ENCODE measurements at regions of chr2 and their contacts with region 1.

Region 1: DNA sequence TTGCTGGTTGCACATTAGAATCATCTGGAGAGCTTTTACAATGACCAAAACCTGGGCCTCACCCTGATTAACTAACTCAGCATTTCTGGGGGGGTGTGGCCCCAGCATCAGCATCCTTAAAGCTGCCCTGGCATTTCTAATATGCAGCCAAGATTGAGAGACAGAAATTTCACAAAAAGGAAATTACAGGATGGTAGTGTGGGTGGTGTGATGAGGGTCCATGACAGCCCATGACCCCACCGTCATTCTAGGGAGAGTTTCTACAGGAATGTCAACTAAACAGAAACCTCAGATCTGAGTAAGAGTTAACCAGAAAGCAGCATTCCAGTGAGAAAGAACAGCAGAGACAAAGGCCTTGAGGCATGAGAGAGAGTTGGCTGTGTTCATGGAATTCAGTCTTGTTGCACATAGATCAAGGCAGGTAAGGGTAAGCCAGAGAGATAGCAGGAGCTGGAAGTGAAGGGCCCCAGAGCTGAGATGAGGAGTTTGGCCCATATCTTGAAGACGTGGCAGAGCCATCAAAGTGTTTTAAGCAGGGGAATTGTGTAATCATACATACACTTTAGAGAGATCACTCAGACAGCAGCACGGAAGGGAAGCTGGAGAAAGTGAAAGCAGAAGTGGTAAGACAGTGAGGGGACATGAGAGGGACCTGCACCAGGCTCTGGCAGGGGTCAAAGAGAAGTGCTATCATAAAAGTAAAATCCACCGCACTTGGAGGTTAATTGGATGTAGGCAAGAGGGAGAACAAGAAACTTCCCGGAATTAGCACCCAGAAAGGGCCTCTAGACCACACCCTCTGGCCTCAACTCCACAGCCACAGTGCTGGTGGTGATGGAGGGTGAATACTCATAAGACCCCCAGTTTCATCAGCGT is 7.8 kb upstream of the TRABD2A start:
- DNase-seq: peak in 8 of 10 donors; percentile 40 to 84 (median 56)
- ATAC-seq: peak; percentile 96 to 98
- H3K4me3 Mint-ChIP-seq: peak overlapping the region; percentile 72 to 92 (median 86)
- H3K27ac Mint-ChIP-seq: peak overlapping the region; percentile 94 to 100 (median 98)
- H3K4me1 Mint-ChIP-seq: peaks cover 30 to 73% (median 49%) of the 10 kb centered on the region in 4 donors
- H3K27me3 Mint-ChIP-seq: no peaks in the 10 kb centered on the region

Region 2: DNA sequence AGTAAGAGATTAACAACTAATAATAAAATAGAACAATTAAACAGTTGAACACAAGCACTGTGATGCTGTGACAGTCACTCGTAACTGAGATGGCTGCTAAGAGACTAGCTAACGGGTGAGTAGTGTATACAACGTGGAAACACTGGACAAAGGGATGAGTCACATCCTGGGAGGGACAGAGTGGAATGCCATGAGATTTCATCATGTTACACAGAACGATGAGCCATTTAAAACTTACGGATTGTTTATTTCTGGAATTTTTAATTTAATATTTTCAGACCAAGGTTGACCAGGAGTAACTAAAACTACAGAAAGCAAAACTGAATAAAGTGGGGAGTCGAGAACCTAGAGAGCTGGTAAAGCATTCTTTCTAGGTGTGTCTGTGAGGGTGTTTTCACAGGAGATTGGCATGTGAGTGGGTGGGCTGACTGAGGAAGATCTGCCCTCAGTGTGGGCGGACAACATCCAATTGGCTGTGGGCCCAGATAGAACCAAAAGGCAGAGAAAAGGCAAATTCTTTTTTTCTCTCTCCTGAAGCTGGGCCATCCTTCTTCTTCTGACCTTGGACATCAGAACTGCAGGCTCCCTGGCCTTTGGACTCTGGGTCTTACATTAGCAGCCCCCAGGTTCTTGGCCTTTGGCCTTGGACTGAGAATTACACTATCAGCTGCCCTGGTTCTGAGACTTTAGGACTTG is 31.4 kb after region 1 on chr2:
- POLR2A ChIA-PET with region 1: interaction called, 40 read pairs
- DNase-seq: peak in 6 of 10 donors; percentile 42 to 68 (median 51)
- ATAC-seq: peak; percentile 75 to 81
- H3K4me3 Mint-ChIP-seq: peak overlapping the region; percentile 42 to 82 (median 68)
- H3K27ac Mint-ChIP-seq: peak overlapping the region; percentile 56 to 99 (median 91)
- H3K4me1 Mint-ChIP-seq: peaks cover 20 to 63% (median 55%) of the 10 kb centered on the region in 4 donors
- H3K27me3 Mint-ChIP-seq: no peaks in the 10 kb centered on the region